ENCODE measurements at regions of chr2 and their contacts with region 1.

Region 1: GRCh38 chr2:70142590-70143313 is 48.1 kb downstream of the C2orf42 start:
- DNase-seq: peak; percentile 100
- ATAC-seq: peak; percentile 81 to 87 (median 81)
- H3K4me3 ChIP-seq: peak overlapping the region; percentile 72
- H3K27ac ChIP-seq: peak overlapping the region; percentile 98
- H3K4me1 ChIP-seq: peaks cover 18% of the 10 kb centered on the region
- H3K27me3 ChIP-seq: no peaks in the 10 kb centered on the region
- CTCF ChIP-seq: peak; percentile 97

Region 2: DNA sequence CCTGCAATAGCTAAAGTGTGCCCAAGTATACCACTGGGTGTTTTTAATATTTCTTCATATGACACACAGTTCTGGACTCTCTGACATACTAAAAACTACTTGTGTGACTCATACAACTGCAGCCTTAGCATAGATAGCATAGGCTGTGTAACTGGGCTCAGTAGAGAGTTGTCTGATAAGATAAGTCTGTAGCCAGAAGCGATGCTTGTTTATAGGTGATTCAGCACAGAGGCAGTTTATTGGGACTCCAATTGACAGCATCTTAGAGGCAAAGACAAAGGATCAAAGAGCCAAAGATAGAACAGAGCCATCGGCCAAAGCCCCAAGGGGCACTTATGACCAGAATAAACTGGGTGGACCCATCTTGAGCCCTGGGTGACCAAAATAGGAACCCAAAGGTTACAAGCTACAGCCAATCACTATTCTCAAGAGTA is 541.6 kb before region 1 on chr2:
- intact Hi-C with region 1: no loop called
- DNase-seq: no peak
- ATAC-seq: peak; percentile 81 to 94 (median 90)
- H3K4me3 ChIP-seq: no peak overlapping the region
- H3K27ac ChIP-seq: peak overlapping the region; percentile 67
- H3K4me1 ChIP-seq: peaks cover 44% of the 10 kb centered on the region
- H3K27me3 ChIP-seq: no peaks in the 10 kb centered on the region
- CTCF ChIP-seq: no peak

Region 3: DNA sequence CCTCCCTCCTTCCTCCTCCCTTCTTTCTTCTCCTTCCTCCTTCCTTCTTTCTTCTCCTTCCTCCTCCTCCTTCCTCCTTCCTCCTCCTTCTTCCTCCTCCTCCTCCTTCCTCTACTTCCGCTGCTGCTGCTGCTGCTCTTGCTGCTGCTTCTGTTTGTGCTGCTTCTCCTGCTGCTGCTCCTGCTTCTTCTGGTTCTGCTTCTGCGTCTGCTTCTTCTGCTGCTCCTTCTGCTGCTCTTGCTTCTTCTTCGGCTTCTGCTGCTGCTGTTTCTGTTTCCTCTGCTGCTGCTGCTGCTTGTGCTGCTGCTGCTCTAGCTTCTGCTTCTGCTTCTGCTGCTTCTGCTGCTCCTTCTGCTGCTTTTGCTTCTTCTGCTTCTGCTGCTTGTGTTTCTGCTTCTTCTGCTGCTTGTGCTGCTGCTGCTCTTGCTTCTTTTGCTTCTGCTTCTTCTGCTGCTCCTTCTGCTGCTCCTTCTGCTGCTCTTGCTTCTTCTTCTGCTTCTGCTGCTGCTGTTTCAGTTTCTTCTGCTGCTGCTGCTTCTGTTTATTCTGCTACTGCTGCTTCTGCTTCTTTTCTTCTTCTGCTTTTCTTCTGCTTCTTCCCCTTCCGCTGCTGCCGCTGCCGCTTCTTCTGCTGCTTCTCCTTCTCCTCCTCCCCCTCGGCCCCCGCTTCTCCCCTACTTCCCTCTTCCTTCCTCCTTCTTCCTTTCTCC is 240.4 kb before region 1 on chr2:
- intact Hi-C with region 1: no loop called
- DNase-seq: peak in 1 of 2 donors; percentile 19
- ATAC-seq: no peak
- H3K4me3 ChIP-seq: no peak overlapping the region
- H3K27ac ChIP-seq: no peak overlapping the region
- H3K4me1 ChIP-seq: peaks cover 3% of the 10 kb centered on the region
- H3K27me3 ChIP-seq: no peaks in the 10 kb centered on the region
- CTCF ChIP-seq: no peak

Region 4: GRCh38 chr2:70086838-70087701 is 55.7 kb before region 1 on chr2 and contains the start of gene PCBP1:
- intact Hi-C with region 1: loop called (anchors 1 to 2 kb)
- DNase-seq: peak; percentile 98 to 99
- ATAC-seq: peak; percentile 79 to 85 (median 83)
- H3K4me3 ChIP-seq: peak within 1 kb of the TSS; percentile 96
- H3K27ac ChIP-seq: peak within 1 kb of the TSS; percentile 100
- H3K4me1 ChIP-seq: peaks cover 29% of the 10 kb centered on the region
- H3K27me3 ChIP-seq: no peaks in the 10 kb centered on the region
- CTCF ChIP-seq: no peak
- total RNA-seq, gene PCBP1: 423 to 683 (median 522) TPM

Region 5: GRCh38 chr2:70104231-70105111 is 38.3 kb before region 1 on chr2:
- intact Hi-C with region 1: no loop called
- DNase-seq: no peak
- ATAC-seq: peak in 2 of 4 donors; percentile 34 to 42
- H3K4me3 ChIP-seq: peak overlapping the region; percentile 55
- H3K27ac ChIP-seq: peak overlapping the region; percentile 52
- H3K4me1 ChIP-seq: peaks cover 25% of the 10 kb centered on the region
- H3K27me3 ChIP-seq: no peaks in the 10 kb centered on the region
- CTCF ChIP-seq: no peak

Region 6: DNA sequence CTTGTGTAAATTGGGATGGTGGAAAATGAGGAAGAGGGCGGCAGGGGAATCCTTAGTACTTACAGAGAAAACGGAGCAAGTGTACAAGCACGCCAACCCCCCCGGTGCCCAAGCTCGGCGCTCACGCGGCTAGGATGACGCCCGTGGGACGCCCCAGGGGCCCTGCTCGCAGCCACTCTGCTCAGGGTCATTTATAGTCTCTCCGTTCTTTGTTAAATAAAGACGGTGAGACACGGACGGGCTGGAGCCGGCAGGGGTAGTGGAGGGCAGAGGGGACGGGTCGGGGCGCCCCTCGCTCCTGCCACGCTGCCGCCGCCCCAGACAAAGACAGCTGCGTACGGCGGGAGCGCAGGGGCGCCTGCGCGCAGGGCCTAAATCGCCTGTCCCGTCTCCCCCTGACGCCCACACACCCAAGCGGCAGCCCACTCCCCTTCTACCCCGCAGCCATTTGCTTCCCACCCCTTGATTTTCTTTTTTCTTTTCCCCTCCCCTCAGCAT is 17.7 kb before region 1 on chr2:
- intact Hi-C with region 1: loop called (anchors 1 to 2 kb)
- DNase-seq: peak; percentile 71 to 85
- ATAC-seq: peak; percentile 46 to 66 (median 51)
- H3K4me3 ChIP-seq: peak overlapping the region; percentile 83
- H3K27ac ChIP-seq: peak overlapping the region; percentile 99
- H3K4me1 ChIP-seq: peaks cover 51% of the 10 kb centered on the region
- H3K27me3 ChIP-seq: no peaks in the 10 kb centered on the region
- CTCF ChIP-seq: no peak

Region 7: DNA sequence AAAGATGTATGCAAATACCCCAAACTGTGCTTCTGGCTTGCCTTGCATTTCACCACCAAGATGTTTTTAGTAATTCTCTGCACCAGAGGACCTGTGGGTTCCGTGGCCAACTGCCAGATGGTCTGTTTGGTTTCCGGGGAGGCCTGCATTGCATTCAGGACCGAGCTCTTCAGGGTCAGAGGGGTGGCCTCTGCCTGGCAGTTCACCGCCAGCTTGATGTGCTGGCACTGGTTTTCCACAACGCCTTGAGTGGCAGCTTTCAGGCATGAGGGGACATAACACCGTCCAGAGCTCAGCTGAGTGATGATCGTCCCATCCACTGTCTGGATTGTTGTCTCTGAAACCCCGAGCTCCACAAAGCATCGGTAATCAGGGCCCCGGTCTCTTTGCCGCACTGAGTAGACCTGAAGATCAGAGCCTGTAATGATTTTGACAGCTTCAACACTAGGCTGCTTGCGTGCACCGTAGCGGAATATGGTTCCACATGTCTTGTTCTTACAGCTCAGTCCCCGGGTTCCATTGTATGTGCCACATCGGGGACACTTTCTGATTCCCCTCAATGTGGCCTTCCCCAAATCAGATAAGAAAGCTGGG is 38.7 kb after region 1 on chr2:
- intact Hi-C with region 1: loop called in 1 of 2 experiments (anchors 5 kb)
- DNase-seq: no peak
- ATAC-seq: no peak
- H3K4me3 ChIP-seq: no peak overlapping the region
- H3K27ac ChIP-seq: no peak overlapping the region
- H3K4me1 ChIP-seq: no peaks in the 10 kb centered on the region
- H3K27me3 ChIP-seq: no peaks in the 10 kb centered on the region
- CTCF ChIP-seq: no peak

Region 8: DNA sequence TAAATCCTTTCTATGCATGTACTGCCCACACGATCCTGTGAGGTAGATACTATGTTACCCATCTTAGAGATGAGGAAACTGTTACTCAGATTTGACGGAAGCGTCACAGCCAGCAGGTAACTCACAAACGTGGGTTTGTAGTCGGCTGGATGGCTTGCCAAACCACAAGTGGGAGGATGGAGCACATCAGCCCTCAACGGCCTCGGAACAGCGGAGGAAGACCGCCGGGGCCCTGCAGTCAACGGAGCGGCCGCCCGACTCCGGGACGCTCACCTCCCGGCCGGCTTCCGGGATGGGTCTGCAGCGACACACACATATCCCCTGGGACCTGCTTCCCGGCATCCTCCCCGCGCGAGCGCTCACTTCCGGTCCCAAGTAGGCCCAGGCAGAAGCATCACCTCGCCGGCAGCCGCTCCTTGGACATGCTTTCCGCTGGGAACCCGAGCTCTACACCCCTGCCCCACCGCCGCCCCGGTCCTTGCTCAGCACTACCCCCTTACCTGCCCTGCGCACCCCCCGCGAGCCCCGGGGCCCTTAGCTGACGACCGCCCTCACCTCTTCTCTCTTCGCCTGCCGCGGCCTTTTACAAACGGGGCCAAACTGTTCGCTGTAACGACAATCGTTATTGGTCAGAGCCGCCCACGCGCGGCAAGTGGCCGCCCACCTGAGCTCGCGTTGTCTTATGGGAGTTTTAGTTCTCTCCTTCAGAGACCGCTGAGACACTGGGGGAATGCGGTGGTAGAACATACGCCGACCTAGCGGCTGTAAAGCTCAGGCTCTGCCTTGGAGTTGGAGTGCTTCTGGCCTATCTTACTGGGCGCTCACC is 47.9 kb after region 1 on chr2 and contains the start of gene C2orf42:
- intact Hi-C with region 1: loop called in 1 of 2 experiments (anchors 2 kb)
- DNase-seq: peak; percentile 96 to 98
- ATAC-seq: peak; percentile 97 to 99 (median 98)
- H3K4me3 ChIP-seq: peak within 1 kb of the TSS; percentile 80
- H3K27ac ChIP-seq: peak within 1 kb of the TSS; percentile 87
- H3K4me1 ChIP-seq: no peaks in the 10 kb centered on the region
- H3K27me3 ChIP-seq: no peaks in the 10 kb centered on the region
- CTCF ChIP-seq: no peak
- total RNA-seq, gene C2orf42: 6.4 to 11.0 (median 9.2) TPM